ENCODE measurements at regions of chr7 and their contacts with region 1.

Region 1: GRCh38 chr7:98014352-98014751 is 24.4 kb upstream of the OCM2 start:
- DNase-seq: no peak

Region 2: DNA sequence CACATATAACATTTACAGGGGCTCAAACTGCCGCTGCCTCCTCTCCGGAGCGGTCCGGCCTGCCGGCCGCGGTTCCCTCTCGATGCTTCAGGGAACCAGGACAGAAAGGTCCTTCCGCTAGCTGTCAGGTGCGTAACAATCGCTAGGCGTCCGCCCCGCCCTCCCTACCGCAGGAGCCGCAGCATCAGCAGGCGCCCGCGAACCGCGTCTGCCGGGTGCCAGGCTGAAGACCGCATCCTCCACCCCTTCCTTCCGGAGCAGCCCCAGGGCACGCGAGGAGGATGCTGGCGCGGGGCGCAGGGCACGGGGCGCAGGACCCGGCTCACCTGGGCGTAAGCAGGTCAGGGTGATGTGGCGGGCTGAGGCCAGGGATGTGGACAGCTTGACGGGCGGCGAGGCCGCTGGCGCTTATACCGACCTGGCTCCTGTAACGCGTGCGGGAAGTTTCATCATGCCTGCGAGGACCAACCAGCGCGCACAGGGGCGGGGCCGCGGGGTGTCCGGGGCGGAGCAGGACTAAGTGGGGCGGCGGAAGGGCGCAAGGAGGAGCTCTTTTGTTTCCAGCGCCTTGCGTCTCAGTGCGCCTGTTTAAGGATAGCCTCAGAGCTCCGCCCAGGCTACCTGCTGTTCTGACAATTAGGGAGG is 142.2 kb before region 1 on chr7 and contains the start of gene ASNS:
- CTCF ChIA-PET with region 1: no interaction called
- POLR2A ChIA-PET with region 1: interaction called, 10 read pairs
- DNase-seq: peak; percentile 88